A673 (cell line): ENCODE measurements at regions of chr3 and their contacts with region 1.

Region 1: GRCh38 chr3:179463319-179463718 is 12.0 kb upstream of the GNB4 start:
- DNase-seq: no peak
- H3K4me3 ChIP-seq: no peak overlapping the region
- H3K27ac ChIP-seq: no peak overlapping the region
- H3K4me1 ChIP-seq: peaks cover 4% of the 10 kb centered on the region
- H3K27me3 ChIP-seq: no peaks in the 10 kb centered on the region
- CTCF ChIP-seq: no peak

Region 2: DNA sequence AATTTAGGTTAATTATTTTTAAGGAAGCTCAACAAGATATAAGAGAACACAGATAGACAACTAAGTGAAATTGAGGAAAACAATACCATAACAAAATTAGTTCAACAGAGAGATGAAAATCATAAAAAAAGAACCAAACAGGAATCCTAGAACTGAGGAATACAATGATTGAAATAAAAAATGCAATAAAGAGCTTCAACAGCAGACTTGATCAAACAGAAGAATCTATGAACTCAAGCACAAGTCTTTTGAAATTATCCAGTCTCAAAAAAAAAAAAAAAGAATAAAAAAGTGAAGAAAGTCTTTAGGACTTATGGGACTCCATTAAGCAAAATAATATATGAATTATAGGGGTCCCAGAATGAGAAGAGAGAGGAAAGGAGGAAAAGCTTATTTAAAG is 29.9 kb after region 1 on chr3:
- CTCF ChIA-PET with region 1: no interaction called
- POLR2A ChIA-PET with region 1: interaction called, 11 read pairs
- intact Hi-C with region 1: no loop called
- DNase-seq: no peak
- H3K4me3 ChIP-seq: no peak overlapping the region
- H3K27ac ChIP-seq: no peak overlapping the region
- H3K4me1 ChIP-seq: no peaks in the 10 kb centered on the region
- H3K27me3 ChIP-seq: no peaks in the 10 kb centered on the region
- CTCF ChIP-seq: no peak

Region 3: GRCh38 chr3:179942553-179943075 is 479.3 kb after region 1 on chr3:
- CTCF ChIA-PET with region 1: no interaction called
- POLR2A ChIA-PET with region 1: no interaction called
- intact Hi-C with region 1: no loop called
- DNase-seq: no peak
- H3K4me3 ChIP-seq: no peak overlapping the region
- H3K27ac ChIP-seq: no peak overlapping the region
- H3K4me1 ChIP-seq: no peaks in the 10 kb centered on the region
- H3K27me3 ChIP-seq: peaks cover 11% of the 10 kb centered on the region
- CTCF ChIP-seq: no peak